Transverse colon (tissue), 4 donors: ENCODE measurements at regions of chr17 and their contacts with region 1.

Region 1: DNA sequence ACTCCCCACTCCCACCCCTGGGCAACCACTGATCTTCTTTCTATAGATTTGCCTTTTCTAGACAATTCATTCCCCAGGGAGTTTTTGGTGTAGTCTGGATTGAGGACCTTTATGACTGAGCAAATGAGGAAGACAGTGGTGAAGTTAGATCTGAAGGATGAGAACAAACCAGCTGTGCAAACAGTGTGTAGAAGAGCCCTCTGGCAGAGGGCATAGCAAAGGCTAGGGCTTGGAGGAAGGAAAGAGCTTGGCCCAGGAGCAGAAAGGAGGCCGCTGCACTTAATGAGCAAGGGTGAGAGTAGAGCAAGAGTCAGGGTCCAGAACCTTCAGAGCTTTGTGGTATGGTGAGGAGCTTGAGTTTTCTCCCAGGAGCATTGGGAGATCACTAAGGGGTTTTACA is 352.7 kb downstream of the CA10 start:
- DNase-seq: no peak
- H3K4me3 ChIP-seq: no peak overlapping the region
- H3K27ac ChIP-seq: peak overlapping the region in 2 of 4 donors; percentile 8 to 9
- H3K4me1 ChIP-seq: peaks cover 0 to 20% (median 2%) of the 10 kb centered on the region in 4 donors
- H3K27me3 ChIP-seq: no peaks in the 10 kb centered on the region
- CTCF ChIP-seq: no peak
- EP300 ChIP-seq: no peak
- POLR2A ChIP-seq: no peak

Region 2: DNA sequence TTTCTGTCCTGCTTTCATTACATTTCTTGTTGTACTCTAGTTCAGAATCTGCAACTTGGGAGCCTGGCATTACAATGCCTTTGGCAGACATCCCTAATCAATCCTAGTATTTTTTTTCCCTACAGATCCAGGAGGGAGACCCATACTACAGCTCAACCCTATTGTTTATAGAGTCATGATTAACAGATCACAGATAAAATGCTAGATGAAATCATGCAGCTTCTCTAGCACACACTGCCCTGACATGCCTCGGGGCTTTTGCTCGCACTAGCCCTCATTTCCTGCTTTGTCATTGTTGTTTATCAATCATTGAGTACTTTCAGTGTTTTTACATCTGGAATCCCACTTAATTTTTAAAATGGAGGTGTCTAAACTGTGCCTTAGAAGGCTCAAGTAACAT is 59.8 kb before region 1 on chr17:
- in situ Hi-C with region 1: loop called in 1 of 4 experiments (anchors 10 kb)
- intact Hi-C with region 1: no loop called
- DNase-seq: no peak
- H3K4me3 ChIP-seq: no peak overlapping the region
- H3K27ac ChIP-seq: no peak overlapping the region
- H3K4me1 ChIP-seq: no peaks in the 10 kb centered on the region
- H3K27me3 ChIP-seq: no peaks in the 10 kb centered on the region
- CTCF ChIP-seq: no peak
- EP300 ChIP-seq: no peak
- POLR2A ChIP-seq: no peak

Region 3: DNA sequence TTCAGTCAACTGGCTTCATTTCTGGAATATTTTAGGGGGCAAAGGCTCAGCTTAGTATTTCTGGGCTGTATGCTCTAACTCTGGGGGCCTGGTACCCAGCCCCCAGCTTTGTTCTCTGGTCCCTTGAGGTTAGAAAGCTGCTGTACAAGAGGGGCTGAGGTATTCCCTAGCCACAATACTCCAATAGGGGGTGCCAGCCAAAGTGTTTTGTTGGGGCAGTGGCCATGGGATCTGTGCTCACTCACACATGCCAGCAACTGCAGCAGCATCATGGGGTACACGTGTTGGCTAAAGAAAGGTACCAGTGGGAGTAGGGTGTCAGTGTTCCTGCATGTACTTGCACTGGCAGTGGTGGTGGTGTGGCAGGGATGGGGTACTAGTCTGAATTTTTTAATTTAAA is 95.5 kb after region 1 on chr17:
- in situ Hi-C with region 1: no loop called
- intact Hi-C with region 1: no loop called
- DNase-seq: no peak
- H3K4me3 ChIP-seq: no peak overlapping the region
- H3K27ac ChIP-seq: no peak overlapping the region
- H3K4me1 ChIP-seq: no peaks in the 10 kb centered on the region
- H3K27me3 ChIP-seq: no peaks in the 10 kb centered on the region
- CTCF ChIP-seq: no peak
- EP300 ChIP-seq: no peak
- POLR2A ChIP-seq: no peak